ENCODE measurements at regions of chr1 and their contacts with region 1.

Region 1: DNA sequence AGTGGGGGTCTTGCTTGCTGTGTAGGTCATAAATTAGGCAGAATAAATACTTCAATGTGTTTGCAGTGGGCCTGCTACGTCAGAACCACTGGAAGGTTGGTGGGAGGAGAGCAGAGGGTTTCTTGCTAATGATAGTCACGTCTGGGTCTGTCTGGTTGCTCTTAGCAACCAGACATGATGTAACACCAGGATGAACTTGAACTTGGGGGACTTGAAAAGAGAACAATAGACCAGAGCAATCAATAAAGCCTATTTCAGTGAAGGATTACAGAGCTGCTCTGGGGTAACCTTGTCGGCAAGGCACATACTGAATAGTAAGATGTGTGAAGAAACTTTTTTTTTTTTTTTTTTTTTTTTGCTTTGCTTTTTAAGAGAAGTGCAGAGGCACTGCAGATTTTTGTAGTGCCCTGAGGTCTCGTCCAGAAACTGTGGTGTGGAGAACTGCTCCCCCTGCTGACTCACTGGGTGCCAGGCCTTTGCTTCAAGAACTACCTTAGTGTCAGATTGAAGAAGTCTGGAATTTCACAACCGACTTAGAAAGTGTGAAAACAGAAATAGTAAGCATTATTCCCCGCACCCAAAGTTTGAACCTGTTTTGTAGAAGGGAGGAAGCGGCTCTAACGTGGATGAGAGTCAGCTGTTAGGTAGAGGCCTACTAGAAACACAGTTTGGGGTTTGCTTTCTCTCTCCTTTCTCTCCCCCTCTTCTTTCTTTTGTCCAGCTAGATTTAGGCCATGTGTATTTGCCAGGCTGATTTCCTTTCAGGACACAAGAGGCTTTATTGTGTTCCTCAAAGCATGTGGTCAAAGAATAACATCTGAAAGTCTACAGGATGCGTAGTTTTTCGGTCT is 271.6 kb downstream of the TM2D1 start:
- DNase-seq: peak; percentile 91 to 97 (median 92)
- H3K4me3 ChIP-seq: no peak overlapping the region
- H3K27ac ChIP-seq: peak overlapping the region; percentile 14 to 85
- H3K4me1 ChIP-seq: peaks cover 15% of the 10 kb centered on the region
- H3K27me3 ChIP-seq: no peaks in the 10 kb centered on the region
- CTCF ChIP-seq: peak; percentile 62 to 73 (median 67)
- EP300 ChIP-seq: no peak
- POLR2A ChIP-seq: no peak

Region 2: GRCh38 chr1:60978421-60979357 is 474.6 kb before region 1 on chr1:
- intact Hi-C with region 1: loop called in 2 of 4 experiments (anchors 5 to 10 kb)
- DNase-seq: peak in 2 of 5 donors; percentile 34 to 42
- H3K4me3 ChIP-seq: no peak overlapping the region
- H3K27ac ChIP-seq: no peak overlapping the region
- H3K4me1 ChIP-seq: peaks cover 7% of the 10 kb centered on the region
- H3K27me3 ChIP-seq: no peaks in the 10 kb centered on the region
- CTCF ChIP-seq: peak in 1 of 3 donors; percentile 22
- EP300 ChIP-seq: no peak
- POLR2A ChIP-seq: no peak

Region 3: DNA sequence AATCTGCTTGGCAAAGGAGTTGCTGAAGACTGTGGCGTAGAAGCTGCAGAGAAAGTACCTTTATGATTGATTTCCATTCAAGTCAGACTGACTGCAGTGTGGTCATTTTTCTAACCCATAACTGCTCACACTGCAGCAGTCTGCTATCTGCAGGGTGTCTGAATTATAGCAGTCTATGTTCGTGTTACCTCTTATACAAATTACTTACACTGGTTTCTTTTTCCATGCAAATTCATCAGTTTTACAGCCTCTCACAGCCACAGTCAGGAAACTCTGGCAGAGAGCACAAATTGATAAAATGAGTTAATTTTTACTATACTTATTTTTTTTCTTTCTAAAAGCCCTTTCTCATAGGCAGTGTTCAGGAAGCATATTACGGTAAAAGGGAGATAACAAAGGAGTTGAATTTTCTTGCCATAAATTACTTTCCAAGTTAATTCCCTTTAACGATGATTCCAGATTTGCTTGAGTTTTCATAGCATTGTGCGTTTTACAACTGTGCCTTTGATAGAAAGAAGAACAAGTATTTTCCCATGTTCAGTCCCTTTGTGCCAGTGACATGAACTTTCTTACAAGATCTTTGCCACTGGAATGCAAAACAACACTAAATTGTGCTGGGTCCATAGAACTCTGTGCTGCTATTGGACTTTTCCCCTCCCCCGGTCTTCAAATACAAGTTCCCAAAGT is 109.5 kb before region 1 on chr1:
- intact Hi-C with region 1: loop called in 1 of 4 experiments (anchors 10 kb)
- DNase-seq: no peak
- H3K4me3 ChIP-seq: no peak overlapping the region
- H3K27ac ChIP-seq: no peak overlapping the region
- H3K4me1 ChIP-seq: peaks cover 4% of the 10 kb centered on the region
- H3K27me3 ChIP-seq: no peaks in the 10 kb centered on the region
- CTCF ChIP-seq: no peak
- EP300 ChIP-seq: no peak
- POLR2A ChIP-seq: no peak

Region 4: GRCh38 chr1:61420909-61421835 is 32.2 kb before region 1 on chr1:
- intact Hi-C with region 1: no loop called
- DNase-seq: no peak
- H3K4me3 ChIP-seq: no peak overlapping the region
- H3K27ac ChIP-seq: no peak overlapping the region
- H3K4me1 ChIP-seq: peaks cover 3% of the 10 kb centered on the region
- H3K27me3 ChIP-seq: no peaks in the 10 kb centered on the region
- CTCF ChIP-seq: no peak
- EP300 ChIP-seq: no peak
- POLR2A ChIP-seq: no peak

Region 5: DNA sequence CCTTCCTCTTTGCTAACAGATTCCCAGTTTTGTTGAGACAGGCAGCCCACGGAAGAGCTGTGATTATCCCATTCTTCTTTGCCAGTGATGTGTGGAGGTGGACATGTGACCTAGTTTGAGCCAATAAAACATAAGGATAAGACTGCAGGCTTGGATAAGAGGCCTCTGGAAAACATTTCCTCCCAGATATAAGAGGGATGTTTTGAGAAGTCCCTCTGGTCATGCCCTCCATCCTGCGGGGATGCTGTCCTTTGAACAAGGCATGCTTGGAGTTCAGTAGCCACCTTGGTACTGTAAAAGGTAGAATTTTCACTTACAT is 115.9 kb after region 1 on chr1:
- intact Hi-C with region 1: no loop called
- DNase-seq: no peak
- H3K4me3 ChIP-seq: no peak overlapping the region
- H3K27ac ChIP-seq: no peak overlapping the region
- H3K4me1 ChIP-seq: no peaks in the 10 kb centered on the region
- H3K27me3 ChIP-seq: no peaks in the 10 kb centered on the region
- CTCF ChIP-seq: no peak
- EP300 ChIP-seq: no peak
- POLR2A ChIP-seq: no peak

Region 6: DNA sequence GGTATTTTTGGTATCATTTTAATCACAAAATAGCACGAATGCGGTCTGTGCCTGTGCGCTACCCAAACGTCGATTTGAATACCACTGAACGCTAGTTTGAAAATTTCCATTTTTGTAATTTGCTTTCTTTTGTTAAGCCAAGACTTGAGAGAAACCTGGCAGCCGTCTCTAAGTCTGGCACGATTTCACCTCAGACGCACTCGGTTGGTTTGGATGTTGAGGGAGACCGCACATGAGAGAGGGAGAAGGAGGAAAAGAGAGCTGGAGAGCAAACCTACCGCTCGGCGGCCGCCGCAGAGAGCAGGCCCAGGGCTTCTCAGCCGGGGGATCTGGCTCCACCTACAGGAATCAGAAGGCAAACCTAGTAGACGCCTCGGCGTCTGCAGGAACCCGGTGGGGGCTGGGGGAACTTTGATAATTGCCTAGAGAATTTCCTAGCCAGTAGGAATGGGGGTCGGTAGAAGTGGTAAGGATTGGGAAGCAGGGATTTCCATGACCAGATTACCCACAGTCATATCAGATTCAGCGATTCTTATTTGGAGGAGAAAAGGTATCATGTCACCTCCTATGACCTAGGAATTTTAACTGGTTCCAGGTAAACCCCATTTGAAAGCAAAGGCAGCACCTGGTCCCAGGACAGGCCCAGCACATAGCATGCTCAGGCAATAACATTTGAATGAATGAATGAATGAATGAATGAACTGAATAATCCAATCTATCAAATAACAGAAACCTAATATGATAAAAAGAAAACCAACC is 188.4 kb after region 1 on chr1:
- intact Hi-C with region 1: loop called in 2 of 4 experiments (anchors 5 to 10 kb)
- DNase-seq: peak; percentile 79 to 87 (median 81)
- H3K4me3 ChIP-seq: peak overlapping the region; percentile 21
- H3K27ac ChIP-seq: peak overlapping the region in 1 of 2 donors; percentile 64
- H3K4me1 ChIP-seq: peaks cover 18% of the 10 kb centered on the region
- H3K27me3 ChIP-seq: no peaks in the 10 kb centered on the region
- CTCF ChIP-seq: peak; percentile 46 to 71 (median 63)
- EP300 ChIP-seq: no peak
- POLR2A ChIP-seq: no peak

Region 7: DNA sequence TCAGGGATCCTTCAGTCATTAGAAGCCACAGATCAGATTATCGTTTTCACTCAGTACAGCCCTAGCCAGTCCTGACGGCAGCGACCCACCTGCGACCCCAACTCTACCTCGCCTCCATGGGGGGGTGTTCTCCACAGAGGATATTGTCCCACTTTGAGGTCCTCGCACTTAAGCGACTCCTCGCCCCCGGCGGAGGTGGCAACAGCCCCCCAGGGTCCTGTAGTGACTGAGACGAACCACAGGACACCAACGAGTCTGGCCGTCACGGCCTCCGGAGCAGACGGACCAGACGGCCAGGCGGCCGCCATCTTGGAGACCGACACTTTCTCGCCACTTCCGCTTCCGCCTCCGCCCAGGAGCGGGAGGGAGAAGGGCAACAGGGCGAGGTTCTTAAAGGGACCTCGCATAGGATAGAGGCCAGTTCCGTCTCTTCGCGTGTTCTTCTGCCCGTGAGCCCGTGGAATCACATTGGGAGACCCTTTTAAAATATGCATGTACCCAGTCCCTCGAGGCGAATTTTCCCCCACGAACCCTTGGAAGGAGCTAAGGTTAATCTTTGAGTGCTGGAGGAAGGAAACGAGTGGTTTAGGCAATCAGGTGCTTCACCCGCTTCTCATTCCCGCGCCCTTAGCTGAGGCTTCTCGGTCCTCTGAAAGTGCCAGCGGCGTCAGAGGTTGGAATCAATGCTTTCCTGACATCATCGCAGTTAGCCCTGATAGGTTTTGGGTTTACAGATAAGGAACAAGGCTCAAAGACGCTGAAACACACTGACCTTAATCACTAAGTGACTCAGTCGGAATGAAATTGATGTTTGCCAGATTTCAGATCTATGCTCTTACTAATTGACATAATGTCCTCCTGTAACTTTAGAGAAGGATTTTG is 271.7 kb after region 1 on chr1 and contains the start of gene TM2D1:
- intact Hi-C with region 1: loop called in 1 of 4 experiments (anchors 10 kb)
- DNase-seq: peak; percentile 84 to 90 (median 86)
- H3K4me3 ChIP-seq: peak within 1 kb of the TSS; percentile 78
- H3K27ac ChIP-seq: peak within 1 kb of the TSS; percentile 74 to 90
- H3K4me1 ChIP-seq: no peaks in the 10 kb centered on the region
- H3K27me3 ChIP-seq: no peaks in the 10 kb centered on the region
- CTCF ChIP-seq: peak in 1 of 3 donors; percentile 13
- EP300 ChIP-seq: no peak
- POLR2A ChIP-seq: peak; percentile 84
- total RNA-seq, gene TM2D1: 34.6 to 62.4 (median 42.4) TPM